Naive thymus-derived CD4-positive, alpha-beta T cell (primary cell): ENCODE measurements at regions of chr15 and their contacts with region 1.

Region 1: GRCh38 chr15:41116116-41116871 is at the start of gene INO80:
- DNase-seq: peak; percentile 92 to 98 (median 96)
- ATAC-seq: peak; percentile 90
- H3K4me3 ChIP-seq: peak within 1 kb of the TSS; percentile 85
- H3K4me3 Mint-ChIP-seq: peak within 1 kb of the TSS; percentile 90 to 99 (median 96)
- H3K27ac ChIP-seq: peak within 1 kb of the TSS; percentile 80
- H3K27ac Mint-ChIP-seq: peak within 1 kb of the TSS; percentile 98 to 100 (median 99)
- H3K4me1 ChIP-seq: peaks cover 14 to 16% of the 10 kb centered on the region in 2 donors
- H3K4me1 Mint-ChIP-seq: peaks cover 5 to 40% (median 30%) of the 10 kb centered on the region in 7 donors
- H3K27me3 ChIP-seq: no peaks in the 10 kb centered on the region
- H3K27me3 Mint-ChIP-seq: peaks cover 0 to 4% (median 0%) of the 10 kb centered on the region in 5 donors
- total RNA-seq, gene INO80: 30.1 to 36.5 (median 32.3) TPM

Region 2: GRCh38 chr15:40694688-40695468 is 421.4 kb before region 1 on chr15 and contains the start of gene RAD51:
- CTCF ChIA-PET with region 1: no interaction called
- POLR2A ChIA-PET with region 1: no interaction called
- intact Hi-C with region 1: loop called in 1 of 2 experiments (anchors 1 kb)
- DNase-seq: peak; percentile 81 to 93 (median 92)
- ATAC-seq: peak; percentile 97
- H3K4me3 ChIP-seq: peak within 1 kb of the TSS; percentile 97
- H3K4me3 Mint-ChIP-seq: peak within 1 kb of the TSS; percentile 93 to 100 (median 95)
- H3K27ac ChIP-seq: peak within 1 kb of the TSS; percentile 91
- H3K27ac Mint-ChIP-seq: peak within 1 kb of the TSS; percentile 95 to 100 (median 99)
- H3K4me1 ChIP-seq: peaks cover 10% of the 10 kb centered on the region in 2 donors
- H3K4me1 Mint-ChIP-seq: peaks cover 14 to 42% (median 22%) of the 10 kb centered on the region in 7 donors
- H3K27me3 ChIP-seq: no peaks in the 10 kb centered on the region
- H3K27me3 Mint-ChIP-seq: no peaks in the 10 kb centered on the region
- total RNA-seq, gene RAD51: 0.51 to 51.5 (median 1.4) TPM

Region 3: DNA sequence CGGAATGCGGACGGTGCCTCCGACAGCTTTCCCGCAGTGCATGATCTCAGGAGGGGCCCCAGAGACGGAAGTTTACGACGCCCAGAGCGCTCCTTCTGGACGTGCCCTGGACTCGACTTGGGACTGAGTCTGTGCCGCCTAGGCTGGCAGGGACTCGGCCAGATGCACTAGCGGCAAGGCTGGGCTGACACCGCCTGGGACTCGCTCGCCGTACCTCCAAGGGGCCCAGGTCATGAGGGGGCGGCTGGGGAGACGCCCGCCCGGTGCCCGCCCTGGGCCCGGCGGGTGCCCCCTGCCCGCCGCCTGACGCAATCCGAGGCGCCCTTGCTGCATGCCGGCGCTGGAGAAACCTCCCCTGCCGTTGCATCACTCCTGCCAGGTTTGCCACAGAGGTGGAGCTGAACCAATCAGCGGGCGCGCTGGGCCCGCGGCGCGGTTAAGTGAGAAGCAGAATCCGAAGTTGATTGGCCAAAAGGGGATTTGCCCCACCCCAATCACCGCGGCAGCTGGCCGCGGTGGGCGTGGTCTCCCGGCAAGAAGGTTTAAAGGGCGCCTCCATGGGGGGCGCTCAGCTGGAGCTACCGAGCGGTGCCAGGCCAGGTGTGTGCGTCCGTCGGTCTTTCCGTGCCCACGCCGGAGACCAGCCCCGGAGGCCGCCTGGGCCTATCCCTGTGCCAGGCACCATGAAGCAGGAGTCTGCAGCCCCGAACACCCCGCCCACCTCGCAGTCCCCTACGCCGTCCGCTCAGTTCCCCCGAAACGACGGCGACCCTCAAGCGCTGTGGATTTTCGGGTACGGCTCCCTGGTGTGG is 163.2 kb before region 1 on chr15 and contains the start of gene CHAC1:
- CTCF ChIA-PET with region 1: no interaction called
- POLR2A ChIA-PET with region 1: interaction called, 3 read pairs
- intact Hi-C with region 1: loop called (anchors 1 kb)
- DNase-seq: peak; percentile 79 to 97 (median 94)
- ATAC-seq: peak; percentile 98
- H3K4me3 ChIP-seq: peak within 1 kb of the TSS; percentile 68
- H3K4me3 Mint-ChIP-seq: peak within 1 kb of the TSS; percentile 87 to 96 (median 94)
- H3K27ac ChIP-seq: peak within 1 kb of the TSS; percentile 74
- H3K27ac Mint-ChIP-seq: peak within 1 kb of the TSS in 8 of 9 donors; percentile 76 to 95 (median 88)
- H3K4me1 ChIP-seq: peaks cover 10 to 14% of the 10 kb centered on the region in 2 donors
- H3K4me1 Mint-ChIP-seq: peaks cover 7 to 34% (median 19%) of the 10 kb centered on the region in 7 donors
- H3K27me3 ChIP-seq: no peaks in the 10 kb centered on the region
- H3K27me3 Mint-ChIP-seq: peaks cover 0 to 4% (median 0%) of the 10 kb centered on the region in 5 donors
- total RNA-seq, gene CHAC1: 0.24 to 5.7 (median 1.1) TPM

Region 4: DNA sequence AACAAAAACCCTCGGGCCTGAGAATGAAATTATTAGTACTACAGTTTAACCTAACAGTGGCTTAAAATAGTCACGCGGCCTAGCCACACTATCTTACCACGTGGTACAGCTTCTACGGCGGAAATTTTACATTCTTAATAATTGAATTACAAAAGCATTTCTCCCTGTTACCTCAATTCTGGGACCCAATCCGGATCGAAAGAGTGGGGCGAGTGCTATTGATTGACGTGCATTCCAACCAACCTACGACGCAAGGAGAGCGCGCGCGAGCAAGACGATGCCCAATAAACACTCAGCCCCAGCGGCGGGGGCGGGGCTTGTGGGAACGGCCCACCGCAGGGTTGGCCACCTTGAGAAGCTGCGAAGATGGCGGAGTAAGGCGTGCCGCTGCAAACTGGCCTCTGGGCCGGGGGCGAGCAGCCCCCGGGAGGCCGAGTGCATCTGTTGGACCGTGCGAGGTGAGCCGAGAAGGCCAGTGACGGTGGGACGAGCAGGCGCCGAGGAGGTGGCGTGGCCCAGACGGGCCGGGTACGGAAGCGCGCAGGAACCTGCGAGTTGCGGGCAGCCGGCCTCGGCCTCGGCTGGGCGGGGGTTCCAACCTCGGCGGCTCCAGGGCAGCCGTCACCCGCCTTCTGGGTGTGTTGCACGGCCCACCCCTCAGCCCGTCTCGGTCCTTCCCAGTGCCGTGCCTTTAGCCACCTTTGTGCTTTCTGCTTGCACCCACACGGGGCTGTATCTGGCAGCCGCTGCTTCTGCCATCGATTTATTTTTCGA is 167.5 kb after region 1 on chr15:
- CTCF ChIA-PET with region 1: no interaction called
- POLR2A ChIA-PET with region 1: no interaction called
- intact Hi-C with region 1: loop called in 1 of 2 experiments (anchors 1 kb)
- DNase-seq: peak; percentile 94 to 98 (median 97)
- ATAC-seq: peak; percentile 98
- H3K4me3 ChIP-seq: peak overlapping the region; percentile 89
- H3K4me3 Mint-ChIP-seq: peak overlapping the region; percentile 90 to 100 (median 92)
- H3K27ac ChIP-seq: peak overlapping the region; percentile 91
- H3K27ac Mint-ChIP-seq: peak overlapping the region; percentile 96 to 99 (median 97)
- H3K4me1 ChIP-seq: peaks cover 21 to 31% of the 10 kb centered on the region in 2 donors
- H3K4me1 Mint-ChIP-seq: peaks cover 22 to 54% (median 51%) of the 10 kb centered on the region in 7 donors
- H3K27me3 ChIP-seq: no peaks in the 10 kb centered on the region
- H3K27me3 Mint-ChIP-seq: peaks cover 0 to 2% (median 0%) of the 10 kb centered on the region in 5 donors

Region 5: DNA sequence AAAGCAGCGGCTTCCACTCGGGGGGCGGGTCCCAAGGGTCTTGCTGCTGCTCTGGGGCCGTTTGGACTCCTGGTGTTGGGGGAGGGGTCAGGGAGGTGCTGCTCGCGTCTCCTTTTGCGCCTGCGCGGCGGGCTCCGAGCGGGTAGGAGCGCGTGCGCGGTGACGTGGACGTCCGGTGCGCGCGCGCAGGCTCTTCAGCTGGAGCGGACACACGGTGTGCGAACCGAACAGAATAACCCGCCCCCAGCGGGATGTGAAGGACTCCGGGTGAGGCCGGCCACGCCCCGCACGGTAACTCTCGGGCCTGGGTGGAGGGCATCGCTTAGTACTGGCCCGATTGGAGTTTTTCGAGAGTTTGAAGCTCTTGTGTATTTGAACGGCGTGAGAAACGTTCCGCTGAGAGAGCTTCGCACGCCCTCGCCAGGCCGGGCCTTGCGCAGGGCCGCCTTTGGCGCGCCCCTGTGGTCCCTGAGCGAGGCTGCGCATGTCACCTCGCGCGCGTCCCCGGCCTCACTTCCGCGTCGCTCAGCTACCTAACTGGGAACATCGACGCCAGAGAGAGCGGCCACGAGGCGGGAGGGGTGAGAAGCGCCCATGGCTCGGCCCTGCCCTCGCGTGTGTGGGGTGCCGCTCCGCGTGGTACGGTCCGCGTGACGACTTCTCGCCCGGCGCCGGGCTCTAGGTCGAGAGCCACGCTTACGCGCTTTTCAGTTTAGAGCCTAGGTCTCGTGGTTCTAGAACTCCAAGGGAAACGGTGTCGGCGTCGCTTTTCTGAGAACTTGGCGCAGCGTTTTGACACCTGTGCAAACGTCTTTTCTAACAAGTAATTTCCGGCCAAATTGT is 544.2 kb after region 1 on chr15 and contains the start of gene MGA:
- CTCF ChIA-PET with region 1: no interaction called
- POLR2A ChIA-PET with region 1: no interaction called
- intact Hi-C with region 1: loop called in 1 of 2 experiments (anchors 1 kb)
- DNase-seq: peak; percentile 86 to 93 (median 91)
- ATAC-seq: peak; percentile 87
- H3K4me3 ChIP-seq: peak within 1 kb of the TSS; percentile 64
- H3K4me3 Mint-ChIP-seq: peak within 1 kb of the TSS; percentile 90 to 100 (median 92)
- H3K27ac ChIP-seq: peak within 1 kb of the TSS; percentile 76
- H3K27ac Mint-ChIP-seq: peak within 1 kb of the TSS; percentile 92 to 98 (median 96)
- H3K4me1 ChIP-seq: peaks cover 20 to 28% of the 10 kb centered on the region in 2 donors
- H3K4me1 Mint-ChIP-seq: peaks cover 16 to 64% (median 47%) of the 10 kb centered on the region in 7 donors
- H3K27me3 ChIP-seq: no peaks in the 10 kb centered on the region
- H3K27me3 Mint-ChIP-seq: peaks cover 0 to 45% (median 0%) of the 10 kb centered on the region in 5 donors
- total RNA-seq, gene MGA: 35.8 to 73.8 (median 47.3) TPM